ENCODE measurements at regions of chr10 and their contacts with region 1.

Region 1: DNA sequence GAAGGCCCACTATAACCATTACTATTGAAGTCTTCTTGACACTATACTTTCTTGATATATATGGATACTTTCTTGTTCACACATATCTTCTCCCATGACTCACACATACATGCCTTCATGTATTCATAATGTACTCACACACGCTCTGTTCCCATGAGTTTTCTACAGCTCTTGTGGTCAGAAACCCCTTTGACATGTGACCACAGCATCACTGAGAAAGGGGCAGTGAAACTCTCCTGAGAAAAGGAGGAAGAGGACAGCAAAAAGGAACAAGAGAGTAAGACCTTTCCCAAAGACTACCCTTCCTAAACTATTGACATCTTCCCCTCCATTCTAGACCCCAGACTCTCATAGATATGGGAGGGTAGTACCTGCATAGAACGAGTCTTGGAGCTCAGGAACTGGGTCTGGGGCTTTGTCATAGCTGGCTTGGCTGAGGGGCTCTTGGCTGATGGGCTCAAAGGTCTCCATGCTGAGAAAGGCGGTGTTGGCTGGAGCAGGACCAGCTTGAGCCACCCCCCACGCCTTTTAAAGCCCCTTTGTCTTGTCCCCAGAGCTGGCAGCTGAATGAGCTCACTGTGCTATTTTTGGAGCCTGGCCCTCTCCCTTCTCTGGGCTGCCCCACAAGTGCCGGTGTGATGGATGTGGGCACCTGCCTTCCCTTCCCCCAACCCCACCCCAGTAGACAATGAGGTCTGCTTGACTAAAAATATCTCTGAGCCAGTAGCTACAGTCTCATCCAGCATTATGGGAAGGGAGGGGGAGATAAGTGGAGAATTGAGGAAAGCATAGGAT is 5.1 kb downstream of the SYNPO2L start:
- DNase-seq: peak; percentile 73 to 92 (median 86)
- ATAC-seq: peak; percentile 63 to 72 (median 66)
- H3K4me3 ChIP-seq: peak overlapping the region in 9 of 12 donors; percentile 7 to 88 (median 70)
- H3K27ac ChIP-seq: peak overlapping the region; percentile 72 to 99 (median 92)
- H3K4me1 ChIP-seq: peaks cover 3 to 66% (median 25%) of the 10 kb centered on the region in 12 donors
- H3K27me3 ChIP-seq: no peaks in the 10 kb centered on the region
- CTCF ChIP-seq: no peak
- POLR2A ChIP-seq: peak in 1 of 2 donors; percentile 45

Region 2: GRCh38 chr10:73717556-73717955 is 66.8 kb after region 1 on chr10:
- intact Hi-C with region 1: loop called in 2 of 10 experiments (anchors 2 to 5 kb)
- DNase-seq: no peak
- ATAC-seq: peak in 3 of 4 donors; percentile 34 to 45 (median 36)
- H3K4me3 ChIP-seq: no peak overlapping the region
- H3K27ac ChIP-seq: peak overlapping the region in 9 of 12 donors; percentile 1 to 82 (median 33)
- H3K4me1 ChIP-seq: peaks cover 0 to 35% (median 3%) of the 10 kb centered on the region in 12 donors
- H3K27me3 ChIP-seq: no peaks in the 10 kb centered on the region
- CTCF ChIP-seq: no peak
- POLR2A ChIP-seq: no peak

Region 3: GRCh38 chr10:73730153-73730906 is 79.6 kb after region 1 on chr10:
- intact Hi-C with region 1: loop called in 3 of 10 experiments (anchors 5 to 10 kb)
- DNase-seq: peak; percentile 87 to 94 (median 89)
- ATAC-seq: peak; percentile 88 to 95 (median 92)
- H3K4me3 ChIP-seq: peak overlapping the region; percentile 31 to 95 (median 85)
- H3K27ac ChIP-seq: peak overlapping the region; percentile 84 to 97 (median 90)
- H3K4me1 ChIP-seq: peaks cover 5 to 48% (median 27%) of the 10 kb centered on the region in 12 donors
- H3K27me3 ChIP-seq: no peaks in the 10 kb centered on the region
- CTCF ChIP-seq: no peak
- POLR2A ChIP-seq: peak in 1 of 2 donors; percentile 45

Region 4: GRCh38 chr10:73743905-73744663 is 93.3 kb after region 1 on chr10 and contains the start of gene SEC24C:
- intact Hi-C with region 1: loop called in 2 of 10 experiments (anchors 10 kb)
- DNase-seq: peak; percentile 97 to 98 (median 97)
- ATAC-seq: peak; percentile 95 to 98 (median 96)
- H3K4me3 ChIP-seq: peak within 1 kb of the TSS; percentile 66 to 98 (median 82)
- H3K27ac ChIP-seq: peak within 1 kb of the TSS; percentile 86 to 98 (median 92)
- H3K4me1 ChIP-seq: peaks cover 0 to 47% (median 36%) of the 10 kb centered on the region in 12 donors
- H3K27me3 ChIP-seq: no peaks in the 10 kb centered on the region
- CTCF ChIP-seq: no peak
- POLR2A ChIP-seq: peak in 1 of 2 donors; percentile 60
- total RNA-seq, gene SEC24C: 42.8 to 65.5 (median 49.5) TPM